HAP-1 (cell line): ENCODE measurements at regions of chr15 and their contacts with region 1.

Region 1: DNA sequence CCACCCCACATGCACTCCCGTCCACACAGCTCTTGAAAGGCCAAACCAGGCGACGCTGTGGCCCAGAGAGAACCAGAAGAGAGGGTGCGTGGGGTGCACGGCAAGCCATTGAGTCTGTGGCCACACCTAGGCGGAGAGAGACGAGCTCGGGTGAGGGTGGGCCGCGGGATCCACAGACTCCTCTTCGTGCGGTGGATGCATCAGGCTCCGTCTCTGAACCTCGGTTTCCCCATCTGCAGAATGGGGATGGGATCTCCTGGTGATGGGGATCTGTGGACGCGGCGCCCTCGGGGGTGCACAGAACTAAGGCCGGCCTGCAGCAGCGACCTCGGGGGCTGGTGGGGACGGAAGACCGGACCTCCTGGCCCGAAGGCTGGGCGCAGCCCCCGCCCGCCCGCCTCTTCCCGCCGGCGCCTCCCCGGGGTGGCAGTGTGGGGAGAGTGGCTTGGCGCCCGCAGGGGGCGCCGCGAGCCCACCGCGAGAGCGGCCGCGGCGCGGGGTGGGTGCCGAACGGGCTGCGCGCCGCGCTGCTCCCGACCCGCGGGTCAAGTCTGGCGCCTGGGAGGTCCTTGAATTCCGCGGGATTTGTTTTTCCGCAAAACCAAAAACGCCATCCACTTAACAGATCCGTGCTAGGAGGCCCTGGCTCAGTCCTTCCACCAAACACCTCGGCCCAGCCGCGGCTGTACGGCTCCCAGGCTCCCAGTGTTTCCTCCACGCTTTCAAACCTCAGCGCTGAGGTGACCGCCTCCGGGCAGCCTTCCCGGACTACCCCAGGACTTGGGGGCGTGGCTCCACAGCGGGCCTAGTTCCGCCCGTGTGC is 13.2 kb upstream of the ADPGK start:
- DNase-seq: peak; percentile 73 to 84
- H3K4me3 ChIP-seq: peak overlapping the region; percentile 42
- H3K4me1 ChIP-seq: peaks cover 6% of the 10 kb centered on the region
- H3K27me3 ChIP-seq: no peaks in the 10 kb centered on the region; the same call in 1 of the 2 replicates

Region 2: DNA sequence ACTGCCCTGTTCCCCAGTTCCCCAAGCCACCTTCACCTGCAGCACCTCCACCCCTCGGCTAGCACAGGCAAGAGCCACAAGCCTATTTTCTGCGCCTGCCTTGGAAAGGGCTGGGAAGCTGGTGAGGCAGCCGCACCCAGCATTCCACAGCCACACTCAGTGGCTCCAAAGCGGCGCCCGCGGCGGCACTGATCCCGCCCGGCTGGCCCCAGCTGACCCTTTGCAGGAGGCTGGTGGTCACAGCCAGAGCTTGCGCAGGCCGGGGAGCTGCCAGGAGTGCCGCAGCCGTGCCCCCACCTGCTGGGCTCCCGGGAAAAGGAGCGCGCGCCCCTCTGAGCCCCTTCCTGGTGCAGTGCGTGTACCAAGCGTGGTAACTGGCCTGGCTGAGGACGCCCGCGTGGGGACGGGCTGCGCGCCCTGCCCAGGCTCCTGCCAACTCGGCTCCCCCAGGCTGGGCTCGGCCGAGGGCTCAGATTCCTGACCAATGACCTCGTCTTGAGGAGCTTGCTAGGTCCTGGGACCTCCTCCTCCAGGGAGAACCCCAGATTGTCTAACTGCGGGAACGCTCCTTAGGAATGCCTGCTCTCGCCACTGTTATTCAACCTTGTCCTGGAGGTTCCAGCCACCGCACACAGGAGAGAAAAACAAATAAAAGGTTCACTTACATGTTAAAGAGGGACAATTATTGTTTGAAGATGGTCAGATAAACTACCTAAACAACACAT is 612.4 kb before region 1 on chr15:
- in situ Hi-C with region 1: no loop called
- DNase-seq: peak in 1 of 2 experiments; percentile 46
- H3K4me3 ChIP-seq: no peak overlapping the region
- H3K4me1 ChIP-seq: no peaks in the 10 kb centered on the region
- H3K27me3 ChIP-seq: peaks cover 24% of the 10 kb centered on the region

Region 3: GRCh38 chr15:72473614-72474465 is 322.9 kb before region 1 on chr15 and contains the start of gene ARIH1:
- in situ Hi-C with region 1: no loop called
- DNase-seq: peak; percentile 98 to 100
- H3K4me3 ChIP-seq: peak within 1 kb of the TSS; percentile 67
- H3K4me1 ChIP-seq: peaks cover 12% of the 10 kb centered on the region
- H3K27me3 ChIP-seq: no peaks in the 10 kb centered on the region

Region 4: DNA sequence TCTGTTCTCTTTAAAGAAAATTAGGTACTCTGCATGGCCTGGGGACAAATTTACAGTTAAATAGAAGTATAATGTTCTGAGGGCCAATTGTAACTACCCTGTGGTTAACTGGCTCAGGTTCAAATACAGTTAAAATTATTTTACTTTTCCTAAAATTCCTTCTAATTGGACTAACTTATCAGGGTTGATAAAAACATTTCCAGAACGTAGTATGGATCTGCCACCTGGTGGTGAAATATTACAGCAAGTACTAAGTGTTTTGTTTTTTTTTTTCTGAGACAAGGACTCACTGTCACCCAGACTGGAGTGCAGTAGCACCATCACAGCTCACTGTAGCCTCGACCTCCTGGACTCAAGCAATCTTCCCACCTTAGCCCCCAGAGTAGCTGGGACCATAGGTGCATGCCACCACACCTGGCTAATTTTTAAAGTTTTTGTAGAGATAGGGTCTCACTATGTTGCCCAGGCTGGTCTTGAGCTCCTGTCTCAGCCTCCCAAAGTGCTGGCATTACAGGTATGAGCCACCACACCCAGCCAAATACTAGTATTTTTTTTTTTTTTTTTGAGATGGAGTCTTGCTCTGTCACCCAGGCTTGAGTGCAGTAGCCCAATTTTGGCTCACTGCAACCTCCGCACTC is 284.7 kb after region 1 on chr15:
- in situ Hi-C with region 1: loop called (anchors 5 kb)
- DNase-seq: peak; percentile 56 to 87
- H3K4me3 ChIP-seq: no peak overlapping the region
- H3K4me1 ChIP-seq: no peaks in the 10 kb centered on the region; the same call in 1 of the 2 replicates
- H3K27me3 ChIP-seq: no peaks in the 10 kb centered on the region

Region 5: DNA sequence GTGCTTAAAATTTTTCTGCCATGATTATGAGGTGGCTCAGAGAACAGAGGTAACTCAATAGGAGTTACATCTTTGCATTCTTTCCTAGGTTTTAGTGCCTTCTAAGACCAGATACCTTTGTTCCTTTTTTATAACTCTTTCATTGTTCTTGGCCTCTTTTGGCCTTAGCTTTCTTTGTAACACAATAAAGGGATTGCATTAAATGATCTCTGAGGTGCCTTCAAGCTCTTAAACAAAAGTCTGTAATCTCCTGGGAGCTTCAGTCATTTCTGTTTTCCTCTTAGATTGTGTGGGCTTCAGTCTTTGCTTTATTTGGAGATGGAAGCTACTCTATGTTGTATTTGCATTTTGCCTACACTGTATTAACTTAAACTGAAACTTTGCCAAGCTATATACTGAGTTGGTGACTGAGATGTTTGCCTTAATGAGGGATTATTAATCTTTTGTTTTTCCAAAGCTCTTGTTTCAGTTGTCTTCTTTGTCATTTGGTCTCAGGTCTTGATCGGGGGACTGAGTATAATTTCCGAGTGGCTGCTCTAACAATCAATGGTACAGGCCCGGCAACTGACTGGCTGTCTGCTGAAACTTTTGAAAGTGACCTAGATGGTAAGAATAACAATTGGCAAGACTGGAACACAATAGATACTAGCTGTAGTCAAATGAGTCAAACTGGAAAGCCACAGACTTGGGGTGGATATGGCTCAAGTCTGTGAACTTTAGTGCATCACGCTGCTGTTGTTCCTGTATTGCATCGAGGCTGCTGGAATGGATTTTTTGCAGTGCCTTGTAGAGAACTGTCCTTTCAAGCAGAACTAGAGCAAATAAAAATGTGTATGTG is 461.8 kb after region 1 on chr15:
- in situ Hi-C with region 1: loop called (anchors 10 kb)
- DNase-seq: peak; percentile 51 to 96
- H3K4me3 ChIP-seq: no peak overlapping the region
- H3K4me1 ChIP-seq: peaks cover 17% of the 10 kb centered on the region
- H3K27me3 ChIP-seq: no peaks in the 10 kb centered on the region